ENCODE measurements at regions of chr17 and their contacts with region 1.

Region 1: DNA sequence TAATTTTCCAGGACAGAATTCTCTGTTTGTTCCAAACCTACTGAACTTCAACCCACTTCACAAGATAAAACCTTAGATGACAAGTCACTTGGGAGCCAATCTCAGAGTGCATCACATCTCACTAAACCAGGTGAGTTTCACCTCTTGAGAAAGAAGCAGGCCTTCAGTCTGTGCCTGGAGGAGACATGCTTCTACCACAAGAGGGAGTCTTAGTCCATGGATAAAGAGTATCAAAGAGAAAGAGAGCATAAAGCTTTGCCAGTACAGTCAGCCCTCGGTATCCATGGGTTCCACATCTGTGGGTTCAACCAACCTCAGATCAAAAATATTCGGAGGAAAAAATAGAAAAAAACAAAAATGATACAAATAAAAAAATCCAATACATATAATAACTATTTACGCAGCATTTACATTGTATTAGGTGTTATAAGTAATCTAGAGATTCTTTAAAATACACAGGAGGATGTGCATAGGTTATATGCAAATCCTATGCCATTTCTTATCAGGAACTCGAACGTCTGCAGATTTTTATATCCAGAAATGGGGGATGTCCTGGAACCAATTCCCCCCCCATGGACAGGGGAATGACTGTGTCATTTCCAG is 37.7 kb downstream of the DUSP14 start:
- DNase-seq: peak; percentile 31
- H3K4me3 Mint-ChIP-seq: no peak overlapping the region
- H3K27ac Mint-ChIP-seq: no peak overlapping the region
- H3K4me1 Mint-ChIP-seq: peaks cover 6% of the 10 kb centered on the region
- H3K27me3 Mint-ChIP-seq: no peaks in the 10 kb centered on the region

Region 2: DNA sequence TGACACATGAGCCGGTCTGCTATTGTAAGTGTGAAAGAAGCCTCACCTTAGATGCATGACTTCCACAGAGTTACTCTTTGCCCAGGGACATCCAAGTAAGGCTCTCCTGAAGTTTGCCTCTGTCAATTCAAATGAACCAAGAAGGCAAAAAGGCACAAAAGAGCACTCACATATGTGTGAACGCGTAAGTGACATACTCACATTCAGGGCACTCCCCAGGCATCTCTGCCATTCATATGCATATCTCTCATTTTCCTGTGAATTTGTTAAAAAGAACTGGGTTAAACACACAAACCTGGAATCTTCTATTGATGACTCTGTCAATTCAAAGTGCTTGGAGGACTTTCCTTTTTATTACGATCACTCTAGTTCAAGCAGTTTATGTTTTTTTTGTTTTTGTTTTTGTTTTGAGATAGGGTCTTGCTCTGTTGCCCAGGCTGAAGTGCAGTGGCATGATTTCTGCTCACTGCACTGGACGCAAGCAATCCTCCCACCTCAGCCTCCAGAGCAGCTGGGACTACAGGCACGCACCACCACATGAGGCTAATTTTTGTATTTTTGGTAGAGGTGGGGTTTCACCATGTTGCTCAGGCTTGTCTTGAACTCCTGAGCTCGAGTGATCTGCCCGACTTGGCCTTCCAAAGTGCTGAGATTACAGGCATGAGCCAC is 11.8 kb after region 1 on chr17:
- CTCF ChIA-PET with region 1: no interaction called
- DNase-seq: no peak
- H3K4me3 Mint-ChIP-seq: no peak overlapping the region
- H3K27ac Mint-ChIP-seq: no peak overlapping the region
- H3K4me1 Mint-ChIP-seq: no peaks in the 10 kb centered on the region
- H3K27me3 Mint-ChIP-seq: no peaks in the 10 kb centered on the region

Region 3: GRCh38 chr17:37816950-37817349 is 289.6 kb after region 1 on chr17:
- CTCF ChIA-PET with region 1: interaction called, 14 read pairs
- DNase-seq: no peak
- H3K4me3 Mint-ChIP-seq: no peak overlapping the region
- H3K27ac Mint-ChIP-seq: no peak overlapping the region
- H3K4me1 Mint-ChIP-seq: peaks cover 17% of the 10 kb centered on the region
- H3K27me3 Mint-ChIP-seq: peaks cover 58% of the 10 kb centered on the region